ENCODE measurements at regions of chr14 and their contacts with region 1.

Region 1: GRCh38 chr14:99258876-99259726 is 12.9 kb downstream of the BCL11B start:
- DNase-seq: peak; percentile 82
- H3K4me3 Mint-ChIP-seq: peak overlapping the region; percentile 91
- H3K27ac Mint-ChIP-seq: peak overlapping the region; percentile 99
- H3K4me1 Mint-ChIP-seq: peaks cover 93% of the 10 kb centered on the region
- H3K27me3 Mint-ChIP-seq: no peaks in the 10 kb centered on the region

Region 2: DNA sequence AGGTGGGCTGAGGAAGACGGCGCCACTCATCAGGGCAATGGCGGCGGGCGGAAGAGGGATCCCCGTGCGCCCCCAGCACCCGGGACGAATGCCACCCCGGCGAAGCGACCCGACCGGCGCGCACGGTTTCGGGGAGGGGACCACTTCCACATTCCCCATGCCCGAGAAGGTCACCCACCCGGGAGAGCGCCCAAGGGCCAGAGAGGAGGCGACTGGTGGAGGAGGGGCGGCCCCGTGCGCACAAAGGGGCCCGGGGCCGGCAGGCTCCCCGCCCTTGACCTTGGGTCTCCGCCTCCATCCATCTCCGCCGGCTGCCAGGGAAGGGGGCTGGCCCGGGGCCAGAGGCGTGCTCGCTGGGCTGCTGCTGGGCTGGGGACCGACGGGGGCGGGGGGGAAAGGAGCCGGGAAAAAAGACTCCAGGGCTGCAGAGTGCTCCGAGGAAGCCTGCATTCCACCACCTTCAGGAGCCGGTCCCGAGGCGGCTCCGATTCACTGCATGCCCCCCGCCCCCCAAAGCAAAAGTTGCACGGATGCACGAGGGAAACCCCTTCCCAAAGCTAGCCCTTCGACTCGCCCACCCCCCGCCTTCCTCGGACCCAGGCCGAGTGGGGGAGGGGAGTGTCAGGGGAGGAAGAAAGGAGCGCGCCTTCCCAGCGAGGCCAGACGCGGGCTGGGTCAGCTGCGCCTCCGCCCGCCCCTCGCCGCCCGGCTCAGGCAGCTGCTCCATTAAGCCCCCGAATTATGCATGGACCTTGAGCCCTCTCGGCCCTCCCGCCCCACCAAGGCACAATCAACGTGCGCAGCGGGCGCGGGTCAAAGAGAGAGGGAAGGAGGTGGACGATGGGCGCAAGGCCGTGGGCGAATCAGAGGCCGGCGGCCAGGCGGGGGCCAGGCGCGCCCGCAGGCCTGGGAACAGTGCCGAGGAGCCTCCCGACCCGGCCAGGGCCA is 13.3 kb before region 1 on chr14:
- intact Hi-C with region 1: loop called (anchors 1 kb)
- DNase-seq: peak; percentile 80
- H3K4me3 Mint-ChIP-seq: peak overlapping the region; percentile 90
- H3K27ac Mint-ChIP-seq: peak overlapping the region; percentile 99
- H3K4me1 Mint-ChIP-seq: peaks cover 77% of the 10 kb centered on the region
- H3K27me3 Mint-ChIP-seq: no peaks in the 10 kb centered on the region

Measured in activated CD4-positive, alpha-beta T cell treated with anti-CD3 and anti-CD28 coated beads, Interleukin-2, amount 10 ng/mL, durations not matched to agents 24 days and 14 days (primary cell).